ENCODE measurements at regions of chr19 and their contacts with region 1.

Region 1: GRCh38 chr19:17522988-17523872 is 11.8 kb downstream of the PGLS start:
- DNase-seq: no peak
- ATAC-seq: peak; percentile 41
- H3K4me3 ChIP-seq: no peak overlapping the region
- H3K27ac ChIP-seq: no peak overlapping the region; the same call in 2 of the 3 replicates
- H3K4me1 ChIP-seq: peaks cover 7 to 38% of the 10 kb centered on the region in 2 experiments; a peak in 2 of 5 replicates
- H3K27me3 ChIP-seq: 0 out of 5 replicates have a peak, but pooled peaks cover 0 to under 1% of the 10 kb centered on the region in 2 experiments
- CTCF ChIP-seq: no peak
- EP300 ChIP-seq: no peak
- POLR2A ChIP-seq: no peak
- RAD21 ChIP-seq: no peak

Region 2: GRCh38 chr19:17470068-17470841 is 53.0 kb before region 1 on chr19 and contains the start of gene SLC27A1:
- CTCF ChIA-PET with region 1: no interaction called
- POLR2A ChIA-PET with region 1: no interaction called
- in situ Hi-C with region 1: no loop called
- intact Hi-C with region 1: no loop called
- DNase-seq: peak; percentile 92 to 99 (median 94)
- ATAC-seq: peak; percentile 95
- H3K4me3 ChIP-seq: peak within 1 kb of the TSS; percentile 76
- H3K27ac ChIP-seq: peak within 1 kb of the TSS; percentile 73
- H3K4me1 ChIP-seq: peaks cover 30 to 43% of the 10 kb centered on the region in 2 experiments
- H3K27me3 ChIP-seq: no peaks in the 10 kb centered on the region
- CTCF ChIP-seq: no peak
- EP300 ChIP-seq: no peak
- POLR2A ChIP-seq: peak; percentile 68
- RAD21 ChIP-seq: no peak
- polyA plus RNA-seq, gene SLC27A1: 0.06 to 0.10 TPM

Region 3: DNA sequence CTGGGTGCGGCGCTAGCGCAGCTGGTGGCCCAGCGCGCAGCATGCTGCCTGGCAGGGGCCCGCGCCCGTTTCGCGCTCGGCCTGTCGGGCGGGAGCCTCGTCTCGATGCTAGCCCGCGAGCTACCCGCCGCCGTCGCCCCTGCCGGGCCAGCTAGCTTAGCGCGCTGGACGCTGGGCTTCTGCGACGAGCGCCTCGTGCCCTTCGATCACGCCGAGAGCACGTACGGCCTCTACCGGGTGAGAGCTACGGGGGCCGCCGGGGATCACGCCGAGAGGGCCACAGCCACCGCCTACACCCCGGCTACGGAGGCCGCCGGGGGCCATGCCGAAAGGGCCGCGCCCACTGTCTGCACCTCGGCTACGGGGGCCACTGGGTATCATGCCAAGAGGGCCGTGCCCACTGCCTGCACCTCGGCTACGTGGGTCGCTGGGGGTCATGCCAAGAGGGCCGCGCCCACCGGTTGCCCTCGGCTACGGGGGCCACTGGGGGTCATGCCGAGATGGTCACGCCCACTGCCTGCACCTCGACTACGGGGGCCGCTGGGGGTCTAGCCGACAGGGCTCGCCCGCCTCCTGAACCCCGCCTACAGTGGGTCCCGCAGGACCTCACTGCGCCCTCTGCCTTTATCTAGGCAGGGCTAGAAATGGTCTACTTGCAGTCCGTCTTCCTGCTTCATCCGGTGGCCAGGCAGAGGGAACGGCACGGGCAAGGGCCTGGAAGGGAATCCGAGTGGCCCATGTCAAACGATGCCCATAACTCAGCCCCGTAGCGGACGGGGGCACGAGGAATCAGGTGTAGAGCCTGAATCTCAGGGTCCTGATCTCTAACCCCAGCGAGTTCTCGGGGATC is 11.3 kb before region 1 on chr19:
- CTCF ChIA-PET with region 1: no interaction called
- POLR2A ChIA-PET with region 1: interaction called, 25 read pairs
- in situ Hi-C with region 1: no loop called
- intact Hi-C with region 1: no loop called
- DNase-seq: peak; percentile 80 to 90 (median 87)
- ATAC-seq: peak; percentile 66
- H3K4me3 ChIP-seq: peak overlapping the region; percentile 83
- H3K27ac ChIP-seq: peak overlapping the region; percentile 97
- H3K4me1 ChIP-seq: peaks cover 22 to 40% of the 10 kb centered on the region in 2 experiments
- H3K27me3 ChIP-seq: no peaks in the 10 kb centered on the region
- CTCF ChIP-seq: peak; percentile 27 to 55 (median 43); a peak in 4 of 6 replicates
- EP300 ChIP-seq: no peak
- POLR2A ChIP-seq: peak; percentile 88
- RAD21 ChIP-seq: 0 out of 4 replicates have a peak, but pooled peaks of 1 of the 2 experiments have one; percentile 21

Region 4: DNA sequence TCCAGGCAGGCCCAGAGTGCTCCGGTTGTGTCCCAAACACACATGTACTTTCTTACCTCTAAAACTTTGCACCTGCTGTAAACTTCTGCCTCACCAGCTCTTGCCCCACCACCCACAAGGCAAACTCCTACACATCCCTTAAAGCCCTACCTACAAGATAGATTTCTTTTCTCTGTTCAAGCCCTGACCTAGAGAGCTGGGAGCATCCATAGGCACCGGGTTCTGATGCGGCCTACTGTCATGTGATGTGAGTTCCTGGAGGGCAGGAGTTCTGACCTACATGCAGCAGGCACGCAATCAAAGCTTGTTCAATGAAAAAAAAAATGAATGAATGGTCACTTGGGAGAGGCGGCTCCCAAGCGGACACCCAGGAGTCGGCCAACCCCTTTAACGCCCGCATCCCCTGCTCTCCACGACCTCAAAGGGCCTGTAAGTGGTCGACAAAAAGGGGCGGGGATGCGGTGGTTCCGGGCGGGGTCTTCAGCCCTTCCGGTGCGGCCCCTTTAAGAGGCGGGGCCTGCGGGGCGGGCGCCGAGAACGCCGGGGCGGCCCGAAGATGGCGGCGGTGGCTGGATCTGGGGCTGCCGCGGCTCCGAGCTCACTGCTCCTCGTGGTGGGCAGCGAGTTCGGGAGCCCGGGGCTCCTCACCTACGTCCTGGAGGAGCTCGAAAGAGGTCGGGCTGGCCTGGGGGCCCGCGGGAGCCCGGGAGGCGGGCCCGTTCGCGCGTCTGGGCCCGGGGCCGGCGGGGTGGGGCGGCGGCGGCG is 195.9 kb after region 1 on chr19 and contains the start of gene MAP1S:
- CTCF ChIA-PET with region 1: no interaction called
- POLR2A ChIA-PET with region 1: no interaction called
- in situ Hi-C with region 1: no loop called
- intact Hi-C with region 1: no loop called
- DNase-seq: peak; percentile 78 to 88 (median 86)
- ATAC-seq: peak; percentile 91
- H3K4me3 ChIP-seq: peak within 1 kb of the TSS; percentile 87
- H3K27ac ChIP-seq: peak within 1 kb of the TSS; percentile 56
- H3K4me1 ChIP-seq: peaks cover 27 to 43% of the 10 kb centered on the region in 2 experiments; a peak in 4 of 5 replicates
- H3K27me3 ChIP-seq: no peaks in the 10 kb centered on the region
- CTCF ChIP-seq: no peak
- EP300 ChIP-seq: no peak
- POLR2A ChIP-seq: peak; percentile 83
- RAD21 ChIP-seq: no peak
- polyA plus RNA-seq, gene MAP1S: 2.0 to 3.0 TPM